Left ventricle myocardium superior (tissue), 1 donor: ENCODE measurements at regions of chr18 and their contacts with region 1.

Region 1: GRCh38 chr18:9516437-9517064 is 41.2 kb downstream of the RALBP1 start:
- DNase-seq: no peak
- ATAC-seq: peak; percentile 54

Region 2: GRCh38 chr18:9079818-9080528 is 436.6 kb before region 1 on chr18:
- intact Hi-C with region 1: loop called (anchors 10 kb)
- DNase-seq: no peak
- ATAC-seq: peak; percentile 50

Region 3: DNA sequence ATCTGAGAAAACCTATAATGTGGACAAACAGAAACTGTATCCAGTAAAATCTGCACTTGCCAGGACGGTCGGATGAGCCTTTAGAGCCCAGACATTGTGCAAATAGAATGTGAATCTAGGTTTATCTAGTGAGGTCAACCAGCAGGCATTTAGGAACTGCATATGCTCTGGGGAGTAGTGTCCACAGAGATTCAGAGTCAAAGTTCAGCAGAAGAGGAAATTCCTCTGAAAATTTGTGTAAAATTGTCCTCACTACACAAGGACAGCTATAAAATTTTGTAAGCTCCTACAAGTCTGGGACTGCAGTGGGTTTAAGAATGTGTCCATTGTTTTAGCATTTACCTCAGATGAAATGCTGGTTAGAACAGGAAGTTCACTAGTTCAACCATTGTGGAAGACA is 423.9 kb before region 1 on chr18:
- intact Hi-C with region 1: no loop called
- DNase-seq: no peak
- ATAC-seq: peak; percentile 38

Region 4: DNA sequence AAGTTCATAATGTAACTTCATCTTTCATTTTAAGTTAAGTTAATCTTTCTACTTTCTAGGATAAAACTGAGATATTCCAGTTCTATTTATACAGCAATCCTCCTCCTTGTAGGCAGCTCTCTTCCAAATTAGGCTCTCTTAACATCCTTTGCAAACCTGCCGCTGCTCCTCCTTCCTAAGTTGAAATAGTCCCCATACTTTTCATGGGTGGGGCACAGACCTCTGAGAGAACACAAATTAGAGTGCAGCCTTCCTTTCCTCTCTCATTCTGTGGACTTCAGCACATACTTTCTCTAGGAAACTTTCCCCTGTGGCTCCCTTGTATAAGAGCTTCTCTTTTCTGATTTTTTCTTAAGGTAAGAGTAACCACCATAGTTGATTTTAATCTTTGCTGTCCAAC is 153.7 kb before region 1 on chr18:
- intact Hi-C with region 1: loop called (anchors 5 kb)
- DNase-seq: no peak
- ATAC-seq: no peak

Region 5: GRCh38 chr18:9608298-9608697 is 91.7 kb after region 1 on chr18:
- intact Hi-C with region 1: no loop called
- DNase-seq: no peak
- ATAC-seq: no peak